Activated naive CD4-positive, alpha-beta T cell treated with anti-CD3 and anti-CD28 coated beads for 36 hours (primary cell): ENCODE measurements at regions of chr2 and their contacts with region 1.

Region 1: DNA sequence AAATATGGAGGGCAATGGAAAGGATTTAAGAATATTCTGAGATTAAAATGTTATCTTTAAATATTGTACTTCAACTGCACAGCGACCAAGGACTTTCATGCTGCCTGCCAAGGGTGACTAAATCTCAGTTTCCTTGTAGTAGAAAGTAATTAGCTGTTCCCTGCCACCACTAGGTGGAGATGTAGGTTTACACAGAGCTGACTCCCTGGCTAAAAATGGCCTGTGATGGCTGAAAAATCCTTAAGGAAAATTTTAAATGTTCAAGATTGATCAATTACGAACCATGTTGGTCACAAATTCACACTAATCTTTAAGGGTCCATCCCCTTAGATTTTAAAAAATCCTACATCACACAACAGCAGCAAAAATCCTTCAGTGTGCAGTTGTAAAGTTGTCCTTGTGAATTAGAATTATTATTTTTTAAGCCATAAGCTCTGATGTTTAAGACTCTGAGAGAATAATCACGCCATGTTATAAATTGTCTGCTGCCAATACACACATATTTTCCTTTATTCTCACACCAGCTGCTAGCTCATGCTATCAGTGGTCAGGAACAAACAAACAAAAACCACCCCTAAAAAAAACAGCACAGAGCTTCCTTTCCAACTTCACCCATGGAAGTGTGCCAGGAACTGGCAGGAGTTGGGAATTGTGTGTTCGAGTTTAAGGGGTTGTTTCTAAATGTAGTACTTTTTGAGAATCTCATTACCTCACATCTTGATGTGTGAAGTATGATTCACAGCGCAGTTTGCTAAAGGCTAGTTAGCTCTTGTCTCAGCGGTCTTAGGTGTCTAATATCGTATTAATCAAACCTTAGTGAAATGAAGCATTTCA is 399.8 kb downstream of the TMEM182 start:
- DNase-seq: no peak
- H3K4me3 Mint-ChIP-seq: no peak overlapping the region
- H3K27ac Mint-ChIP-seq: no peak overlapping the region
- H3K4me1 Mint-ChIP-seq: no peaks in the 10 kb centered on the region
- H3K27me3 Mint-ChIP-seq: no peaks in the 10 kb centered on the region

Region 2: GRCh38 chr2:102801098-102801718 is 360.5 kb before region 1 on chr2:
- CTCF ChIA-PET with region 1: no interaction called
- intact Hi-C with region 1: no loop called
- DNase-seq: peak; percentile 10
- H3K4me3 Mint-ChIP-seq: no peak overlapping the region
- H3K27ac Mint-ChIP-seq: no peak overlapping the region
- H3K4me1 Mint-ChIP-seq: peaks cover 9% of the 10 kb centered on the region
- H3K27me3 Mint-ChIP-seq: no peaks in the 10 kb centered on the region

Region 3: GRCh38 chr2:102841107-102841840 is 320.4 kb before region 1 on chr2:
- CTCF ChIA-PET with region 1: interaction called, 4 read pairs
- intact Hi-C with region 1: loop called (anchors 2 kb)
- DNase-seq: peak; percentile 54
- H3K4me3 Mint-ChIP-seq: no peak overlapping the region
- H3K27ac Mint-ChIP-seq: no peak overlapping the region
- H3K4me1 Mint-ChIP-seq: no peaks in the 10 kb centered on the region
- H3K27me3 Mint-ChIP-seq: no peaks in the 10 kb centered on the region

Region 4: GRCh38 chr2:103008586-103008985 is 153.1 kb before region 1 on chr2:
- CTCF ChIA-PET with region 1: no interaction called
- intact Hi-C with region 1: no loop called
- DNase-seq: no peak
- H3K4me3 Mint-ChIP-seq: no peak overlapping the region
- H3K27ac Mint-ChIP-seq: no peak overlapping the region
- H3K4me1 Mint-ChIP-seq: no peaks in the 10 kb centered on the region
- H3K27me3 Mint-ChIP-seq: no peaks in the 10 kb centered on the region

Region 5: DNA sequence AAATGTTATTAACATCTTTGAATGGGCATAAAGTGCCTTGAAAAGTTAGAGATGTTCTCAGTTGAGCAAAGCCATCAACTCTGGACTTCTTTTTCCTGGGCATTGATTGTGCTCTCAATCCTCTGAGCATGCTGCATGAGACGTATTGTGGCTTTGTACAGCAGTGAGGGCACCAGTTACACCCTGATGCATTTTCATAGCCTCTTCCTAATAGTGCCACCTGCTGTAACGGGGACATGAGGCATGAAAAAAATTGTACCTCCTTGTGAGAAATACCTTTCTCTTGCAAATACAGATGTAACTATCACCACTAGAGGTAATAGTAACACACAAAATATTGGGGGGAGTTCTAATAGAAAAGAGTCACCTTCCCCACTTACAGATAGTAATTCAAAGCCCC is 297.6 kb after region 1 on chr2:
- CTCF ChIA-PET with region 1: no interaction called
- intact Hi-C with region 1: no loop called
- DNase-seq: no peak
- H3K4me3 Mint-ChIP-seq: no peak overlapping the region
- H3K27ac Mint-ChIP-seq: no peak overlapping the region
- H3K4me1 Mint-ChIP-seq: no peaks in the 10 kb centered on the region
- H3K27me3 Mint-ChIP-seq: no peaks in the 10 kb centered on the region